Activated CD8-positive, alpha-beta T cell treated with anti-CD3 and anti-CD28 coated beads, Interleukin-2, amount 10 ng/mL, durations not matched to agents 7 days and 5 days (primary cell): ENCODE measurements at regions of chr6 and their contacts with region 1.

Region 1: GRCh38 chr6:79789843-79790242 is 157.5 kb downstream of the ELOVL4 start:
- DNase-seq: no peak
- ATAC-seq: no peak
- H3K4me3 Mint-ChIP-seq: no peak overlapping the region
- H3K27ac Mint-ChIP-seq: no peak overlapping the region
- H3K4me1 Mint-ChIP-seq: peaks cover 4% of the 10 kb centered on the region
- H3K27me3 Mint-ChIP-seq: peaks cover 11% of the 10 kb centered on the region

Region 2: DNA sequence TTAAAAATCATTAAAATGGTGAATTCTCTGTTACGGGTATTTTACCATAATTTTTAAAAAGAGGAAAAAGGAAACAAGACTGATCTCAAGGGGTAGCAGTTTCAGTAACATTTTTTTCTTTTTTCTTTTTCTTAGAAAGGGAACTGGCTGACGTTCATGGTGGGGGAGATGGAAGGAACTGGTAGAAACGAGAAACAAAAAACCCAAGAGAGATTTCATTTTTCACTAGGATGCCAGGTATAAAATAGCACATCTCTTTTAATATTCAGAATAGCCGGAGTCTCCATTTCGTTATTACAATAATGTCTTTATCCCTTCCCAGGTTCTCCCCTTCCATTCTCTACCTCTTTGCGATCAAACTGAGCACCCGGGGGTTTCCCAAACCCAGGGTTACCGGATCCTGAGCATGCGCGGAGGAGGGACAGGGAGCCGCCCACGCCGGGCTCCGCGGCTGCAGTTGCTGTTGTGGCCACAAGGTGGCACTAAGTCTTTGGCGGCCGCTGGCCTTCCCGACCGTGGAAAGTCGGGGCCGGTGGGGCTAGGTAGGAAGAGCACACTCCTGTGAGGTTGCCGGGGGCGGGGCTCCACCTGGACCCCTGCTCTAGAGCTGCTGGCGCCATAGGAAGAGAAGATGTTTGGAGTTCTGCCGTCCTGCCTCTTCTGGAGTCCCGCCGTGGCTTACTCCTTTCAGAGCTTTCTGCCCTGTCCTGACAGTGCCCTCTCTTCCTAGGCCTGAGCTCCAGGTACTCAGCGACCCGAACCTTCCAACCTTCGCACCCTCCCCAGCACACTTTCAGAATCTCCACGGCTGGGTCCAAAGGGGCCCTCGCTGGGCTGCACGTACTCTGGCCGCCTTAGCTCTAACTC is 11.9 kb before region 1 on chr6:
- CTCF ChIA-PET with region 1: interaction called, 18 read pairs
- POLR2A ChIA-PET with region 1: no interaction called
- DNase-seq: peak; percentile 84
- ATAC-seq: peak; percentile 95
- H3K4me3 Mint-ChIP-seq: peak overlapping the region; percentile 67
- H3K27ac Mint-ChIP-seq: no peak overlapping the region
- H3K4me1 Mint-ChIP-seq: peaks cover 7% of the 10 kb centered on the region
- H3K27me3 Mint-ChIP-seq: peaks cover 4% of the 10 kb centered on the region